AG04449 (cell line): ENCODE measurements at regions of chr5 and their contacts with region 1.

Region 1: DNA sequence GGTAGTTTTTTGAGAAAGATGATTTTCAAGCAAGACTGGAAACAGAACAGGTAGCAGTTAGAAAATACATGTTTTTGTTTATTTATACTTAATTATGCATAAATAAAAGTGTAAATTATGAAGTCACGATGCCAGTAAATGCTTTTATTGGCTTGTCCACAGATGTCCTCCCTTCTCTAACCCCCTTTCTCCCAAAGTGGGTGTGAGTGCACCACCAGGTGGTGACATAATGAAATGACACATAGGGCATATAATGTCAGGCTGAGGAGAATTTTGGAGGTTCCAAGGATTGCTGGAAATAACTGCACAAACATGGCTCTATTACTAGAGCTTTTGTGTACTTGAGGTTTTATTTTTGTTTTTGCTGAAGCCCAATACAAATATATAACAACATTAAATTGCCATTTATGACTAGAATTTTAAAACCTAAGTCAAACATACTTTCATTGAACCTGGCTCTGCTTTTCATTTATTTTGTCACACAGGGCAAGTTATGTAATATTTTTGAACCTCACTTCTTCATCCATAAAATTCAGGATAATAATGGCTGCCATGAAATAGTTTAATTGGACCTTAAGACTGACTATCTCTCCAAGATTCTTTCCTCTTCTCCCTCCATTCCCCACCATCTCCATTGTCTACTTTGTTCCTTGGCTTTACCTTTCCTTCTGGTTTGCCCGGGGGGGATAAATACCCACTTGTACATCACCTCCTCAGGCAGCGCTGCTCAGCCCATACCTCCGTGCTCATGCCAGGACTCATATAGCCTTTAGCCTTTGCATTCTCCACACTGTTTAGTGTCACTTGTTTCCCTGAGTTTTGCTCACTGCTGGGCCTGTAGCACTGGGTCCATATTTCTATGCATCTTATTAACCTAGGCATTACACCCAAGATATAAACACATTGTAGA is 168.8 kb downstream of the PDE4D start:
- DNase-seq: no peak
- H3K4me3 ChIP-seq: no peak overlapping the region
- CTCF ChIP-seq: peak; percentile 47

Region 2: GRCh38 chr5:59238126-59238902 is 486.4 kb before region 1 on chr5:
- CTCF ChIA-PET with region 1: no interaction called
- POLR2A ChIA-PET with region 1: no interaction called
- DNase-seq: no peak
- H3K4me3 ChIP-seq: no peak overlapping the region
- CTCF ChIP-seq: no peak

Region 3: GRCh38 chr5:59712836-59713497 is 11.8 kb before region 1 on chr5:
- CTCF ChIA-PET with region 1: interaction called, 16 read pairs
- POLR2A ChIA-PET with region 1: no interaction called
- DNase-seq: no peak
- H3K4me3 ChIP-seq: no peak overlapping the region
- CTCF ChIP-seq: no peak

Region 4: GRCh38 chr5:59760798-59761348 is 36.1 kb after region 1 on chr5:
- CTCF ChIA-PET with region 1: no interaction called
- POLR2A ChIA-PET with region 1: no interaction called
- DNase-seq: no peak
- H3K4me3 ChIP-seq: no peak overlapping the region
- CTCF ChIP-seq: no peak